ENCODE measurements at regions of chr13 and their contacts with region 1.

Region 1: DNA sequence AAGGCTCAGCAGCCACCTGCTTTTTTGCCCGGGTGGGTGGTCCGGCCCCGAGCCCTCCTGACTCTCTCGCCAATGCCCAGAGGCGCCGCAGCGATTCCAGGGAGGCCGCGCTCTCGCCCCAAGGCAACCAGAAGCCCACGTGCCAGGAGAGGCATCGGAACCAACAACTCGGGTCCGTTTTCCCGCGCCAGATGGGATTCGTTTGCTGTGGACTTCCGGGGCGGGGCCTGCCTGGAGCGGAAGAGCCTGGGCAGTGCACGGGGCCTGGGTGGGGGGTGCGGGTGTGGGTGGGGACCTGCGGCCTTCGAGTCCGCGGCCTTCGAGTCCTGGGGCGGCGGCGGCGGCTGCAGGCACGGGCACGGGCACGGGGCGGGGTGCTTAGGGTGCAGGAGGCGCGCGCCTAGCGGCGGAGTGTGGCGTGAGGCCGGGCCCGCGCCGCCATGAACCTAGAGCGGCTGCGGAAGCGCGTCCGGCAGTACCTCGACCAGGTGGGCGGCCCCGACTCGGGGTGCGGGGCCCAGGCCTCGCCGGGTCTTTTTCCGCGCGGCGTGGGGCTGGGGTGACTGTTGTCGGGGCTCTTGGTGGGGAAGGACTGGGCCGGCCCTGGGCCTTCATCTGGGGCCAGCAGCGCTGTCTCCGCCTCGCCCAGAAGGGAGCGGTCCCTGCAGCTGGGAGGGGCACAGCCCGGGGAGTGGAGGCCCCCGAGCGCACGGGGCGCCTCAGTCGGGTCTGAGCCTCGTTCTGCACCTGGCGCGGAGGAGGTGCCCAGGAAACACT is at the start of gene CDC16:
- DNase-seq: peak; percentile 89
- ATAC-seq: peak; percentile 86
- H3K4me3 ChIP-seq: peak within 1 kb of the TSS; percentile 63 to 82 (median 80)
- H3K4me3 Mint-ChIP-seq: peak within 1 kb of the TSS; percentile 88
- H3K27ac ChIP-seq: peak within 1 kb of the TSS; percentile 28 to 75
- H3K27ac Mint-ChIP-seq: peak within 1 kb of the TSS; percentile 87
- H3K4me1 ChIP-seq: peaks cover 9 to 10% of the 10 kb centered on the region in 2 donors
- H3K4me1 Mint-ChIP-seq: peaks cover 25% of the 10 kb centered on the region
- H3K27me3 ChIP-seq: peaks cover 0 to 6% (median 3%) of the 10 kb centered on the region in 4 experiments
- H3K27me3 Mint-ChIP-seq: peaks cover 9% of the 10 kb centered on the region
- CTCF ChIP-seq: peak; percentile 32
- total RNA-seq, gene CDC16: 121 and 127 TPM in 2 replicates

Region 2: GRCh38 chr13:112828082-112828699 is 1406.6 kb before region 1 on chr13:
- CTCF ChIA-PET with region 1: no interaction called
- POLR2A ChIA-PET with region 1: no interaction called
- intact Hi-C with region 1: no loop called
- DNase-seq: no peak
- ATAC-seq: no peak
- H3K4me3 ChIP-seq: no peak overlapping the region
- H3K4me3 Mint-ChIP-seq: no peak overlapping the region
- H3K27ac ChIP-seq: no peak overlapping the region
- H3K27ac Mint-ChIP-seq: no peak overlapping the region
- H3K4me1 ChIP-seq: no peaks in the 10 kb centered on the region
- H3K4me1 Mint-ChIP-seq: no peaks in the 10 kb centered on the region
- H3K27me3 ChIP-seq: no peaks in the 10 kb centered on the region
- H3K27me3 Mint-ChIP-seq: no peaks in the 10 kb centered on the region
- CTCF ChIP-seq: no peak

Region 3: DNA sequence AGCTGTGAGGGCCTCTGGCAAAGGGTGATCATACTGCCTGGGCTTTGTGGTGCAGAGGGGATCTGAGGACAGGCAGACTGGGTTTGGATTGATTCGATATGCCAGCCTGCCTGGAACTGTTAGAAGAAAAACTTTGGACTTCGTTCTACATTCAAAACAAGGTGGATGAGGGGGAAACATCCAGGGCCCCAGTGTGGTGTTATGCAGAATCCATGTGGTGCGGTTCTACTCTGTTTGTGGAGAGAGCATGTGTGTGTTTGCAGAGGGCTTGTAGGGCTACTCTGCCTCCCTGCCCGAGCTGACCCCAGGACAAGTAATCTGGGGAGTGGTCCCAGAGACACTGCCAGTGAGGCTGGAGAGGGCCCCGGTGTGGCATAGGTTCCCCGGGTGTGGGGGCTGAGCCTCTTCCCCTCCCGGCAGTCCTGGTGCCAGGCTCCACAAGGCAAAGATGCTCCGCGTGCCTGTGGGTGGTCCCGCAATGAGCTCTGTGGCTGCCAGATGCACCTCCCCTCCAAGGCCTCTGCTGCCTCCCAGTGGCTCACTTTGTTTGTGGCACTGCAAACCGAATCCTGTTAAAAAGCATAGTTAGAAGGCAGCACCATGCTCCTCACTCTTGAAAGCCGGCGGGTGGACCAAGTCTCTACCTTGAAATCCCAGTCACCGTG is 672.6 kb before region 1 on chr13:
- CTCF ChIA-PET with region 1: no interaction called
- POLR2A ChIA-PET with region 1: no interaction called
- intact Hi-C with region 1: no loop called
- DNase-seq: peak; percentile 56
- ATAC-seq: peak; percentile 45
- H3K4me3 ChIP-seq: no peak overlapping the region
- H3K4me3 Mint-ChIP-seq: no peak overlapping the region
- H3K27ac ChIP-seq: no peak overlapping the region
- H3K27ac Mint-ChIP-seq: no peak overlapping the region
- H3K4me1 ChIP-seq: peaks cover 0 to 25% of the 10 kb centered on the region in 2 donors
- H3K4me1 Mint-ChIP-seq: peaks cover 22% of the 10 kb centered on the region
- H3K27me3 ChIP-seq: no peaks in the 10 kb centered on the region
- H3K27me3 Mint-ChIP-seq: peaks cover 9% of the 10 kb centered on the region
- CTCF ChIP-seq: peak; percentile 63

Region 4: GRCh38 chr13:113951246-113951999 is 283.4 kb before region 1 on chr13:
- CTCF ChIA-PET with region 1: interaction called, 3 read pairs
- POLR2A ChIA-PET with region 1: no interaction called
- intact Hi-C with region 1: loop called (anchors 2 kb)
- DNase-seq: peak; percentile 77
- ATAC-seq: peak; percentile 95
- H3K4me3 ChIP-seq: peak overlapping the region in 2 of 5 experiments; percentile 26 to 43
- H3K4me3 Mint-ChIP-seq: peak overlapping the region; percentile 39
- H3K27ac ChIP-seq: no peak overlapping the region
- H3K27ac Mint-ChIP-seq: no peak overlapping the region
- H3K4me1 ChIP-seq: peaks cover 7 to 23% of the 10 kb centered on the region in 2 donors
- H3K4me1 Mint-ChIP-seq: peaks cover 17% of the 10 kb centered on the region
- H3K27me3 ChIP-seq: peaks cover 0 to 12% (median 0%) of the 10 kb centered on the region in 4 experiments
- H3K27me3 Mint-ChIP-seq: no peaks in the 10 kb centered on the region
- CTCF ChIP-seq: peak; percentile 70

Region 5: DNA sequence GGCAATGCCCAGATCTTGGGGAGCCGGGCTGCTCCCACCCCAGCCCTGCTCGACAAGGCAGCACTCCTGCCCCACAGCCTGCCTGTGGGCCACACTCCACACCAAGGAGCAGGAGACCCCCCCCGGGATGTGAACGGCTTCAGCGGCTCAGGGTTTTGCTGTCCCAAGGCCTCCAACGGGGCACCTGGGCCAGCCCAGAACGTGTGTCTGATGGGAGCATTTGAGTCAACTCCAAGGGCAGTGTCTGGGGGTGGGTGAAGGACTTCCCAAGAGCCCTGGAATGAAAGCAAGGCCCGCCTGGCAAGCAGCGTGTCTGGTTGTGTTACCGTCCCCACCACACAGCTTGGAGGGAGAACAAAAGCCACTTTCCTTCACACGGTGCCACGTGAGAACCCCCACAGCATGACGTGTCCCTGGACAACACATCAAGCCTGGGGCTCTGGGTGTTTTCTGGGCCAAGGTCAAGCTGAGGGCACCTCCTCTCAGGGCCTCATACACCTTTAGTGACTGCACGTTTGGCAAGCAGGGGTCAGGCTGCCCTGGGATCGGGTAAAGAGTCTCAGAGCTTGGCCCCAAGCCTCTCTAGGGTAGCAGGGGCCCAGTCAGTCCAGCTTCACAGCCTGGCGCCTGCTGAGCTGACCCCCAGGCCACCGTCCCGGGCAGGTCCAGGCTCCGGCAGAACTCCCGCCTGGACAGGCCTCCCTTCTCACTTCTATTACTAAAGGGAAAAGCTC is 266.9 kb before region 1 on chr13:
- CTCF ChIA-PET with region 1: no interaction called
- POLR2A ChIA-PET with region 1: no interaction called
- intact Hi-C with region 1: no loop called
- DNase-seq: no peak
- ATAC-seq: no peak
- H3K4me3 ChIP-seq: no peak overlapping the region
- H3K4me3 Mint-ChIP-seq: no peak overlapping the region
- H3K27ac ChIP-seq: no peak overlapping the region
- H3K27ac Mint-ChIP-seq: no peak overlapping the region
- H3K4me1 ChIP-seq: no peaks in the 10 kb centered on the region
- H3K4me1 Mint-ChIP-seq: no peaks in the 10 kb centered on the region
- H3K27me3 ChIP-seq: no peaks in the 10 kb centered on the region
- H3K27me3 Mint-ChIP-seq: no peaks in the 10 kb centered on the region
- CTCF ChIP-seq: no peak

Region 6: GRCh38 chr13:114281351-114282040 is 46.7 kb after region 1 on chr13 and contains the start of gene UPF3A:
- CTCF ChIA-PET with region 1: no interaction called
- POLR2A ChIA-PET with region 1: interaction called, 6 read pairs
- intact Hi-C with region 1: loop called (anchors 1 kb)
- DNase-seq: peak; percentile 97
- ATAC-seq: peak; percentile 77
- H3K4me3 ChIP-seq: peak within 1 kb of the TSS; percentile 65 to 86 (median 75)
- H3K4me3 Mint-ChIP-seq: peak within 1 kb of the TSS; percentile 89
- H3K27ac ChIP-seq: peak within 1 kb of the TSS; percentile 83 to 90
- H3K27ac Mint-ChIP-seq: peak within 1 kb of the TSS; percentile 95
- H3K4me1 ChIP-seq: peaks cover 23 to 30% of the 10 kb centered on the region in 2 donors
- H3K4me1 Mint-ChIP-seq: peaks cover 34% of the 10 kb centered on the region
- H3K27me3 ChIP-seq: no peaks in the 10 kb centered on the region
- H3K27me3 Mint-ChIP-seq: no peaks in the 10 kb centered on the region
- CTCF ChIP-seq: no peak
- total RNA-seq, gene UPF3A: 106 and 109 TPM in 2 replicates

Region 7: DNA sequence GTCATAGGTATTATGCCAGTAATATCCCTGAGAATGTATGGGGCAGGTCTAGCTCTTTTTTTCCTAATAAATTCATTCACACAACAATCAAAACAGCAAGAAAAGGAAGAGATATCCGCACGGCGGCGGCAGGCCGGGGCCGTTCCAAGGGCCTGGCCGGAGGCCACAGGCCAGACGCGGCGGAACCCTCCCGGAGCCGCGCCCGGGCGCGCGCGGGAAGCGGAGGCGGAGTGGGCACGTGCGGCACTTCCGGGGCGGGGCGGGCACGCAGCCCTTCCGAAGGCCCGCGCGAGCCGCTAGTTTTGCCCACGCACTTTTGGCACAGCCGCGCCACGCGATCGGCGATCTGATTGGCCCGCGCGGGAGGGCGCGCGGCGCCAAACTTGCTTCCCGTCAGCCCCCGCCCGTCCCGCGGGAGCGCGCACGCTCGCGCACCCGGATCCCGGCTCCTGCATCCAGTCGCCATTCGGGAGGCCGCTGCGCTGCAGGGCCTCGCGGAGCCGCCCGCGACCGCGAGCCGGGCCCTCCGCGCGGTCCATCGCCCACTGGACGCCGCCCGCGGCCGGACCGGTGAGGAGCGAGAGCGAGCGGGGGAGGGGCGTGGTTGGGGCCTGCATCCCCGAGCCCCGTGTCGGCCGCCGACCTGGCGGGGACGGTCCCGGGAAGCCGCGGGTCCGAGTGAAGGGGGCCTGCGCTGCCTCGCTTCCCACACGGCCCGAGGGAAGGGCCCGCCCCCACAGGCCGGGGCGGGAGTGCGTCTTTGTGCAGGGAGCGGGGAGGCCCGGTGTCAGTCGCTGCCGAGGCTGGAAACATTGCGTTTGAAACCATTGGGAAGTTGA is 79.5 kb after region 1 on chr13 and contains the start of gene CHAMP1:
- CTCF ChIA-PET with region 1: no interaction called
- POLR2A ChIA-PET with region 1: no interaction called
- intact Hi-C with region 1: loop called (anchors 1 kb)
- DNase-seq: peak; percentile 92
- ATAC-seq: peak; percentile 85
- H3K4me3 ChIP-seq: peak within 1 kb of the TSS; percentile 43 to 86 (median 67)
- H3K4me3 Mint-ChIP-seq: peak within 1 kb of the TSS; percentile 90
- H3K27ac ChIP-seq: peak within 1 kb of the TSS; percentile 80 to 88
- H3K27ac Mint-ChIP-seq: peak within 1 kb of the TSS; percentile 92
- H3K4me1 ChIP-seq: peaks cover 27 to 30% of the 10 kb centered on the region in 2 donors
- H3K4me1 Mint-ChIP-seq: peaks cover 48% of the 10 kb centered on the region
- H3K27me3 ChIP-seq: no peaks in the 10 kb centered on the region
- H3K27me3 Mint-ChIP-seq: no peaks in the 10 kb centered on the region
- CTCF ChIP-seq: no peak
- total RNA-seq, gene CHAMP1: 32.6 and 34.7 TPM in 2 replicates

Measured in B cell (primary cell).